ENCODE measurements at regions of chr1 and their contacts with region 1.

Region 1: GRCh38 chr1:41455479-41456332 is 28.8 kb downstream of the EDN2 start:
- DNase-seq: peak; percentile 82
- ATAC-seq: peak; percentile 92

Region 2: GRCh38 chr1:40915581-40915980 is 540.1 kb before region 1 on chr1:
- intact Hi-C with region 1: no loop called
- DNase-seq: no peak
- ATAC-seq: no peak

Region 3: DNA sequence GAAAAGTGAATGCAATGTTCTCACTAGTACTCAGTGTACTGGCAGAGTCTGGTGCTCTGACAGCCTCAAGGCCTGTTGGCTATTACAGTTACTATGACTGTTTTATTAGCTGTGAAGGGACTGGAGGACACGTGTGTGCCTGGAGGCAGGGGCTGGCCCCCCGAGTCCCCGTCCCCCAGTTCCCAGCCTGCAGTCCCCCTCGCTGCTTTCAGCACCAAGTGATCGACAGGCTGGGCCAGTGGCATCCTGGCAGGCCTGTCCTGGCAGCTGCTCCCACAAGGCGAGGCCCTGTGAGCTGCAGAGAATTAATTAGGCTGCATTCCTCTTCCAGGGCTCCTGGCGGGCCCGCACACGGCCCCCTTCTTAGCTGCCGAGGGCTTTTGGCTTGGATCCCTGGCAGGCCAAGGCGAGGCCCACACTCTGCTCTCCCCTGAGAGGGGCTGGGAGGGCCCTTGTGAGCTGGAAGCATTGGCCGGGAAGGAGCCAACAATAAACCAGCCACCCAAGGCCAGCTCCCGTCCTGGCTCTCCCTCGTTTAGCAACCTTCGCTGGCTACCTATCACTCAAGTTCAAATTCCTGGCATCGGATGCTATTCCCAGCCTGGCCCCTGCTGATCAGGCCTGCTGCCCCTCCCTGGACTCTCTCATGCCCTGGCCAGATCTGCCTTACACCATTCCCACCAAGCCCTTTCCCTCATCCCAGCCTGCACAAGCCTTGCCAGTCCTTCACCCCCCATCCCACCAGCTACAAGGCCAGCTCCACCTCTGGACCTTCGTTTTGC is 19.0 kb after region 1 on chr1:
- intact Hi-C with region 1: loop called (anchors 2 kb)
- DNase-seq: peak; percentile 69
- ATAC-seq: peak; percentile 49